Esophagus muscularis mucosa (tissue), 4 donors: ENCODE measurements at regions of chr3 and their contacts with region 1.

Region 1: DNA sequence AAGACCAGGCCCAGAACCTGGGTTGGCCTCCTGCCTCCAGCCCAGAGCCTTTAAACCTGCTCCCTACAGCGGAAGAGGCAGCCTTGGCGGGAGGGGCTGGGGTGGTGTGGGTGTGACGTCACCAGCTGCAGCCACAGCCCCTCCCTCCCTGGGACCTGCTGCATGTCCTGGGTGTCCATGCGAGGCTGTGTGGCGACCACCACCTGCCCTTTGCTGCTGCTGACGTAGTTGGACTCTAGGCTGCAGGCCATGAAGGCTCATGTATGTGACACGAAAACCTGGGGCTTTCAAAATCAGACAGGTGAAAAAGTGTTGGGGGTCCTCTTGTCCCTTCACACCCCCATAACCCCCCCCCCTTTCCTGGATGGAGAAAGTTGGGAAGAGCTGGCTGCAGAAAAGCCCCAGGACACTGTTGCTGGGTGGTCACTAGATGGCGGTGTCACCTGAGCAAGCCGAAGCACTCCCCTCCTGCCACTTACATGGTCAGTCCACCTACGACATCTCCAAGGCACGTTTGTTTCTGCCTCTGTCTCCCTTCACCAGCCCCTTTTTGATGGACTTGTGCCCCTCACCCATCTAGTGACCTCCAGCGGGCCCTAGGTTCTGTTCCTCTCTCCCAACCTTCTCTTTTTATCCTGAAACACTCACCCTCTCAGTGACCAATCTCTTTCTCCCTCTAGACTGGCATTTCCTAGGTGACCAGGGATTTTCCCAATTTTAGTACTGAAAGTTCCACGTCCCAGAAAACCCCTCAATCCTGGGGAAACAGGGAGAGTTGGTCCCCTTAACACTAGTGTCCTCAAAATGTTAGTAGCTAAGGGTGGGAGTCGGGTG is 35.2 kb downstream of the SLC6A20 start:
- DNase-seq: no peak
- H3K4me3 ChIP-seq: no peak overlapping the region
- H3K27ac ChIP-seq: no peak overlapping the region
- H3K4me1 ChIP-seq: peaks cover 0 to 4% (median 1%) of the 10 kb centered on the region in 4 donors
- H3K27me3 ChIP-seq: peaks cover 0 to 12% (median 0%) of the 10 kb centered on the region in 4 donors
- CTCF ChIP-seq: peak; percentile 71 to 87 (median 79)
- EP300 ChIP-seq: no peak
- POLR2A ChIP-seq: no peak

Region 2: DNA sequence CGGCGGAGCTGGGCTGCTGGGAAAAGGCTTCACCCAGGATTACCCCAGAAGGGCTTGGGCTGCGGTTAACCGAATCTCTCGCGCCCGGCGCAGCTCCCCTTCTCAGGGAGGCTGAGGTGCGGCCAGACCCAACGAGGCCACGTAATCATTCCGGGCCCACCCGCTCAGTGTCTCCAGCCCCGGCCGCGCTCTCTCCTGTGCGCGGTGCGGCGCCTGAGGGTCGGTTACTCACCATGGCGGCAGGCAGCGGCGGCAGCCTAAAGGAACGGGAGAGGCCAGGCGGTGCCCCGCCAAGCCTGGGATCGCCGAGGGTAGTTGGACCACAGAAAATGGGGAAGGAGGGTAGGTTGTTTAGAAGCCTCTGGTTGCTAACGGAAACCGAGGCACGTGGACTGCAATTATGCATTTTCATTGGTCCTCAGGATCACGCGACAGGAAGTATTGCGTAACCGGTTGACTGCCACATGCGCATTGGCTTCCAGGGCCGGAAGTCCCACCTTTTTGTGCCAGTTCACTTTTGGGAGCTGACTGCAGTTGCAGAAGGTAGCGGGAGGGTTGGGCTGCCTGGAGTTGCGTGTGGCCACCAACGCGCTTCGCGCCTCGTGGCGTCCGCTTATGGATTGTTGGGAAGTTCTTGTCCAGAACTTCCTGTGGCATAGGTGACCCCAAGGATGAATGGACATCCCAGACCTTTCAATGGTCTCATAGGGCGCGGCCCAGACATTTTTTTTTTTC is 80.8 kb after region 1 on chr3 and contains the start of gene LZTFL1:
- intact Hi-C with region 1: loop called (anchors 5 kb)
- DNase-seq: peak; percentile 99
- H3K4me3 ChIP-seq: peak within 1 kb of the TSS; percentile 80 to 99 (median 86)
- H3K27ac ChIP-seq: peak within 1 kb of the TSS; percentile 49 to 82 (median 62)
- H3K4me1 ChIP-seq: peaks cover 8 to 27% (median 16%) of the 10 kb centered on the region in 4 donors
- H3K27me3 ChIP-seq: peaks cover 0 to under 1% (median 0%) of the 10 kb centered on the region in 4 donors
- CTCF ChIP-seq: no peak
- EP300 ChIP-seq: no peak
- POLR2A ChIP-seq: no peak
- total RNA-seq, gene LZTFL1: 12.0 to 18.3 (median 17.8) TPM

Region 3: DNA sequence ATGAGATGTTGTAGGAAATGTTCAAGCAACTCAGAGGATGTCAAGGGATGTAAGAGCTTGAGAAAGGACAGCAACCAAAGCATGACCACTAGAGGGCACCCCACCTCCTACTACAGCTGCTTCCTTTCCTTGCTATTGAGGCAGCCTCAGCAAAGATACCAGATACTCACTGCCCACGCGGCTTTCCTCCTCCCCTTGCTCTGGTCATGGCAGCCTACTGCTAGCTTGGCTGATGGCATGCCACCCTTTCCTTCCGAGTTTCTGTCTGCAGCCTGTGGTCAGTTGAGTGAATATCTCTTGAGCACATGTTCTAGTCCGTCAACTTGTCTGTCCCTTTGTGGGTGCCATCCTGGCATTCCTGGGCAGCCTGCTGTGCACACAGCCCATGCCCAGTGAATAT is 177.8 kb after region 1 on chr3:
- intact Hi-C with region 1: loop called (anchors 5 kb)
- DNase-seq: peak; percentile 94
- H3K4me3 ChIP-seq: no peak overlapping the region
- H3K27ac ChIP-seq: no peak overlapping the region
- H3K4me1 ChIP-seq: peaks cover 7 to 19% (median 11%) of the 10 kb centered on the region in 4 donors
- H3K27me3 ChIP-seq: no peaks in the 10 kb centered on the region
- CTCF ChIP-seq: peak; percentile 76 to 91 (median 86)
- EP300 ChIP-seq: no peak
- POLR2A ChIP-seq: no peak

Region 4: GRCh38 chr3:46038916-46039315 is 277.8 kb after region 1 on chr3:
- intact Hi-C with region 1: no loop called
- DNase-seq: no peak
- H3K4me3 ChIP-seq: no peak overlapping the region
- H3K27ac ChIP-seq: no peak overlapping the region
- H3K4me1 ChIP-seq: no peaks in the 10 kb centered on the region
- H3K27me3 ChIP-seq: no peaks in the 10 kb centered on the region
- CTCF ChIP-seq: no peak
- EP300 ChIP-seq: no peak
- POLR2A ChIP-seq: no peak

Region 5: DNA sequence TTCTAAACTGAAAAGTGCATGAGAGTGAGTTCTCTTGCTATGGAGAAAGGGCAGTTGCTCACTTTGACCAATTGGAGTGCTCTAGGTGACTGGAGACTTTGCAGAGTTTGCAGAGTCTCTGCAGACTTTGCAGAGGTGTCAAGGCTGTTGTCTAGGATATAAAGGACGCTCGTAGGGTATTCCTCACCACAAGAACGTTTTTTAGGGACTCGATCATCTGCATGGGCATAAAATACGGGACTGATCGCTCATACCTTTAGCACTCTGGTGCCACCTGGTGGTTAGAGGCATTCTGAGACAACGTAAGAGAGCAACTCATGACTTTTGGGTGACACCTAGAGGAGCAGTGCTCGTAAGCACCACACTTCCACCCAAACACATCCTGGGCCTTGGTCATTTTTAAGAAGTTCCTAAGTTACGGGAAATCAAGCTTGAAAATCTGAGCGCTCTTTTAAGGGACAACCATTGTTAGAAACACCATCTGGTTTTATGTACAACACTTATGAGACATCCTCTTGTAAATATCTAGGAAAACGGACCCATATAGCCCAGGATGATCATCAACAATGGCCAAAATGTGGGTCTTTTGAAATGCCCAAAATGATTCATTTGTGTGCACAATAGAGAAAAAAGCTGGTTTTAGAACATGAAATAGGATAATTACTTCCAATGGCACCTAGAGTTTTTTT is 317.8 kb after region 1 on chr3:
- intact Hi-C with region 1: loop called (anchors 5 kb)
- DNase-seq: peak; percentile 97
- H3K4me3 ChIP-seq: peak overlapping the region in 1 of 4 donors; percentile 43
- H3K27ac ChIP-seq: no peak overlapping the region
- H3K4me1 ChIP-seq: peaks cover 0 to 4% (median 2%) of the 10 kb centered on the region in 4 donors
- H3K27me3 ChIP-seq: no peaks in the 10 kb centered on the region
- CTCF ChIP-seq: peak; percentile 96 to 98 (median 98)
- EP300 ChIP-seq: no peak
- POLR2A ChIP-seq: no peak